Activated T-helper 2 cell treated with anti-CD3 and anti-CD28 coated beads, Interferon-gamma antibody, Interleukin-2, Interleukin-4, amounts not matched to agents 10 μg/mL and 5 μg/mL and 100 μg/mL, durations not matched to agents 14 hours and 24 hours and 36 hours (primary cell): ENCODE measurements at regions of chr3 and their contacts with region 1.

Region 1: GRCh38 chr3:57692259-57693147 is at the start of gene DENND6A:
- DNase-seq: peak; percentile 93
- H3K4me3 Mint-ChIP-seq: peak within 1 kb of the TSS; percentile 83
- H3K27ac Mint-ChIP-seq: peak within 1 kb of the TSS; percentile 85
- H3K4me1 Mint-ChIP-seq: peaks cover 28% of the 10 kb centered on the region
- H3K27me3 Mint-ChIP-seq: no peaks in the 10 kb centered on the region
- total RNA-seq, gene DENND6A: 21.4 and 24.3 TPM in 2 replicates

Region 2: DNA sequence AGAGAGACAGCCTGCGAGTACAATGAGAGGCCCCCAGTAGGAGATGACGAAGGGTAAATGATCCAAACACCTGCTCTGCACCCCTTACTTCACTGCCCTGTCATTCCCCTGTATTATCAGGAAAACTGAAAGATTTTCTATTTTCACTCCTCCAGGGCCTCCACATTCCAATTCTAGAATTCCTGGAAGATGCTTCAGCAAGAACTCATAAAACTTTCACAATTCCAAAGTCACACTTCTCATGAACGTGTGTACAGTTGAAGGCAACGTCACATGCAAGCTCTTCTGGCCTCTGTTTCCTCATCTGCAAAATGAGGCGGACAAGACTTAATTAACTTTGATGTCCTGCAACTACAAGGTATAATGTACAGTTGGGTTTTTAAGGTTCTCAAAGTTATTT is 694.8 kb before region 1 on chr3:
- intact Hi-C with region 1: no loop called
- DNase-seq: no peak
- H3K4me3 Mint-ChIP-seq: no peak overlapping the region
- H3K27ac Mint-ChIP-seq: no peak overlapping the region
- H3K4me1 Mint-ChIP-seq: peaks cover 3% of the 10 kb centered on the region
- H3K27me3 Mint-ChIP-seq: peaks cover 8% of the 10 kb centered on the region

Region 3: GRCh38 chr3:57555738-57556458 is 136.6 kb before region 1 on chr3 and contains the start of gene PDE12:
- intact Hi-C with region 1: loop called (anchors 2 kb)
- DNase-seq: peak; percentile 80
- H3K4me3 Mint-ChIP-seq: peak within 1 kb of the TSS; percentile 88
- H3K27ac Mint-ChIP-seq: peak within 1 kb of the TSS; percentile 98
- H3K4me1 Mint-ChIP-seq: peaks cover 39% of the 10 kb centered on the region
- H3K27me3 Mint-ChIP-seq: no peaks in the 10 kb centered on the region
- total RNA-seq, gene PDE12: 26.4 and 28.1 TPM in 2 replicates

Region 4: DNA sequence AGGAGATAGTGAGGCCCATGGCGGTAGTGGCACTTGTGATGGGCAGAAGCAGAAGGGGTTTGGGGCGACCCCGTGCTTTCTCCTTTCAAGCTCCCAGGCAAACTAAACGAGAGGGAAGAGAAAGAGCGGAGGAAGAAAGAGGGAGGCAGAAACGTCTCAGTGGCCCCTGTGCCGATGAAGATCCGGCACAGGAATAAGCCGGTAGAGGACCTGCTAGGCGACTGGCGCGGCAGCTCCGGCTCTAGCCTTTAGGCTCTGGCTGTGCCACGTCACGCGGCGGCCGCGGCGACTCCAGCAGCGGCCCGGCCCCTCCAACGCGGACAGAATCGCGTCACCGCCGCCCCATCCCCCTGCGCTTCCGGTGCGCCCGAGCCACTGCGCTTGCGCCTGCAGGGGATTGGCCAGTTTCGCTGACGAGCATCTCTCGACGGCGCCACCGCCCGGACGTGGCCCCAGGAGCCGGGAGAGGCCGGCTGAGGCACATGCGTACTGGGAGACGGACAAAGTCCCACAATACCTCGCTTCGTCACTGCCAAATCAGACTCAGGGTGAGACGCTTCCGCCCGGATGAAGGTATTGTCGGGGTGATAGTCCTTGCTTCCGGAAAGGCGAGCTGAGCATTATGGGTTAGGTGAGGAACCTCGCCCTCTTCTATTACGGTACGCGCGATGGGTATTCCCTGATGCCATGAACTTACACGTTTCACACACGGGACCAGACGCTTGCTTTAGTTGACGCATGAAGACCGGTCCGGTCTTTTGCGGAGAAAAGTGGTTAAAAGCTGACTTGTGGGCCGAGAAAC is 95.2 kb before region 1 on chr3 and contains the start of gene ARF4:
- intact Hi-C with region 1: loop called (anchors 1 kb)
- DNase-seq: peak; percentile 100
- H3K4me3 Mint-ChIP-seq: peak within 1 kb of the TSS; percentile 97
- H3K27ac Mint-ChIP-seq: peak within 1 kb of the TSS; percentile 100
- H3K4me1 Mint-ChIP-seq: peaks cover 32% of the 10 kb centered on the region
- H3K27me3 Mint-ChIP-seq: no peaks in the 10 kb centered on the region
- total RNA-seq, gene ARF4: 93.6 and 95.6 TPM in 2 replicates

Region 5: DNA sequence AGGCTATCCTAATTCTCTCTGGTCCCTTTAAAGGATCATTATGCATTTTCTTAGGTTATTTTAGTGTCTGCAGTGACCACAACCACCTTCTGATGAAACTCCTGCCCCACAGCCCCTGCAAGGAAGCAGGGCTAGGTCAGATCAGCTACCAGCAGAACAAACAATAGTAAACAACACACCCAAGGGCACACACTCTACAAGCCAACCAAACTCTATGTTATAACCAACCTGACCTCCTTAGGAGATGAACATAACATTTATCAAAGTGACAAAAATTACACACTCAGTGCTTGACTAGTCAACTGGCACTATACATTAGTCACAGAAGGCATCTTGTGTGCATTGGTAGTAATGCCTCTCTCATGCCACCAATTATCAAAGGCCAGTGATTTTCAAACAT is 17.0 kb before region 1 on chr3:
- intact Hi-C with region 1: loop called (anchors 1 kb)
- DNase-seq: no peak
- H3K4me3 Mint-ChIP-seq: no peak overlapping the region
- H3K27ac Mint-ChIP-seq: peak overlapping the region; percentile 1
- H3K4me1 Mint-ChIP-seq: peaks cover 34% of the 10 kb centered on the region
- H3K27me3 Mint-ChIP-seq: no peaks in the 10 kb centered on the region

Region 6: DNA sequence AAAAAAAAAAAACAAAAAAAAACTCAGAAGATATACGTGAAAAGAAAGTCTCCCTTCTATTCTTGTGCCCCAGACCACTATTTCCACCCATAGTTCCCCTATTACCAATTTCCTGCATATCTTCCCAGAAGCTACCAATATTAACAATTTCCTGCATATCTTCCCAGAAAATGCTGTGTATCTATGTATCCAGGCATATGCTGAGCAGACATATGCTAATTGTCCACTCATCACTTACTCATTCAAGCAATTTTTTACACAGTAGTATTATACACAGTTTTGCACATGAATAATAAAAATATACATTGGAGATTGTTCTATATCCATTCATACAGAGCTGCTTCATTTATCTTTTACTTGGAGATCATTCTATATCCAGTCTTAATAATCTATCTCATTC is 51.0 kb after region 1 on chr3:
- intact Hi-C with region 1: no loop called
- DNase-seq: no peak
- H3K4me3 Mint-ChIP-seq: no peak overlapping the region
- H3K27ac Mint-ChIP-seq: no peak overlapping the region
- H3K4me1 Mint-ChIP-seq: no peaks in the 10 kb centered on the region
- H3K27me3 Mint-ChIP-seq: no peaks in the 10 kb centered on the region

Region 7: DNA sequence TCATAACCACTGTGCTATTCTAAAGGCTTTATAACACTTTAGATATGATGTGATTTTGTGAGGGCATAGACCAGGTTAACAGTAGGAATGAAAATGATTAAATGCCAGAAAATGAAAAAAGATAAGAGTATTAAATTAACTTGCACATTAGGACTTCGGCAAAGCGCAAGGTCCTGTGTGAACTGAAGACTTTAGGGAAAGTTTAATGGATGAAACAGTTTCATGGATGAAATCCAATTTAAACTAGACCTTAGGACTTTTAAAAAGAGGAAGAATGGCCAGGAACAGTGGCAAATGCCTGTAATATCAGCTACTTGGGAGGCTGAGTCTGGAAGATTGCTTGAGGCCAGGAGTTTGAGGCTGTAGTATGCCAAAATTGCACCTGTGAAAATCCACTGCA is 72.3 kb after region 1 on chr3:
- intact Hi-C with region 1: no loop called
- DNase-seq: no peak
- H3K4me3 Mint-ChIP-seq: no peak overlapping the region
- H3K27ac Mint-ChIP-seq: no peak overlapping the region
- H3K4me1 Mint-ChIP-seq: peaks cover 11% of the 10 kb centered on the region
- H3K27me3 Mint-ChIP-seq: no peaks in the 10 kb centered on the region